Dendritic cell treated with granulocyte-macrophage colony-stimulating factor and Interleukin-4, amounts not matched to agents 40 ng/mL and 50 ng/mL, for 4 days (primary cell): ENCODE measurements at regions of chr19 and their contacts with region 1.

Region 1: DNA sequence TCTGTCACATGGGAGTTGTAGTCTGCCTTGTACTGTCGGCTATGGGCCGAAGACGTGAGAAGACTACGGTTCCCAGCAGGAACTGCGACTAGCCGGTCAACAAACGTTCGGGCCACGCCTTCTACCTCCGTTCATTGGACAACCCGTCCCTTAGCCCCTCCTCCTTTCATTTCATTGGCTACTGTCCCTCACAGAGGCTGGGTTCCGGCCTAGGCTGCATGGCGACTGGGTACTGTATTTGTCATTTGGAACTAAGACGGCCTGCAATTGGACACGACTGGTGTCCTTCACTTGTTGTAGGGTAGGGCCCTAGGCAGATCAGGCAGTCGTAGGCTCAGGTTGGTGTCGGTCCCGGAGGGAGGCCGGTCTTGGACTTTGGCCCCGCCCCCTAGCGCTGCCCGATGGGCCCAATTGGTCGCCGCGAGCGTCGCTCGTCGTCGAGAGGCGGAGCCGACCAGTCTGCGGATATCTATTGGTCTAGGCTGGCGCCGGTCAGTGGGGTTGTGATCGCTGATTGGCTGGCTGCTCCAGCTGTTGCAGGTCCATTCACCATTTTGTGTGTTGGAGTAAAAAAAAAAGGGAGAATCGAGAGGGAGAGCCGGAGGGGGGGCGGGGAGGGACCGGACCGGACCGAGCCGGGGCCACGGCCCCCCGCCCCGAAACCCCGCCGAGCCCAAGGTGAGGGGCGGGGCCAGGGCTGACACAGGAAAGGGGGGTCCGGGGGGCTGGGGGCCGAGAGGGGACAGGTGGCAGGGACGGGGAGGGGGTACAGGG is at the start of gene CIC:
- H3K4me3 Mint-ChIP-seq: peak within 1 kb of the TSS; percentile 90
- H3K27ac Mint-ChIP-seq: no peak within 1 kb of the TSS
- H3K4me1 Mint-ChIP-seq: peaks cover 40% of the 10 kb centered on the region
- H3K27me3 Mint-ChIP-seq: no peaks in the 10 kb centered on the region

Region 2: GRCh38 chr19:42207767-42208271 is 61.1 kb before region 1 on chr19:
- intact Hi-C with region 1: no loop called
- H3K4me3 Mint-ChIP-seq: peak overlapping the region; percentile 43
- H3K27ac Mint-ChIP-seq: peak overlapping the region; percentile 78
- H3K4me1 Mint-ChIP-seq: peaks cover 80% of the 10 kb centered on the region
- H3K27me3 Mint-ChIP-seq: no peaks in the 10 kb centered on the region

Region 3: GRCh38 chr19:42254989-42255765 is 13.7 kb before region 1 on chr19 and contains the start of gene ERF:
- intact Hi-C with region 1: loop called (anchors 1 kb)
- H3K4me3 Mint-ChIP-seq: peak within 1 kb of the TSS; percentile 88
- H3K27ac Mint-ChIP-seq: peak within 1 kb of the TSS; percentile 88
- H3K4me1 Mint-ChIP-seq: peaks cover 47% of the 10 kb centered on the region
- H3K27me3 Mint-ChIP-seq: peaks cover 20% of the 10 kb centered on the region